ENCODE measurements at regions of chr22 and their contacts with region 1.

Region 1: DNA sequence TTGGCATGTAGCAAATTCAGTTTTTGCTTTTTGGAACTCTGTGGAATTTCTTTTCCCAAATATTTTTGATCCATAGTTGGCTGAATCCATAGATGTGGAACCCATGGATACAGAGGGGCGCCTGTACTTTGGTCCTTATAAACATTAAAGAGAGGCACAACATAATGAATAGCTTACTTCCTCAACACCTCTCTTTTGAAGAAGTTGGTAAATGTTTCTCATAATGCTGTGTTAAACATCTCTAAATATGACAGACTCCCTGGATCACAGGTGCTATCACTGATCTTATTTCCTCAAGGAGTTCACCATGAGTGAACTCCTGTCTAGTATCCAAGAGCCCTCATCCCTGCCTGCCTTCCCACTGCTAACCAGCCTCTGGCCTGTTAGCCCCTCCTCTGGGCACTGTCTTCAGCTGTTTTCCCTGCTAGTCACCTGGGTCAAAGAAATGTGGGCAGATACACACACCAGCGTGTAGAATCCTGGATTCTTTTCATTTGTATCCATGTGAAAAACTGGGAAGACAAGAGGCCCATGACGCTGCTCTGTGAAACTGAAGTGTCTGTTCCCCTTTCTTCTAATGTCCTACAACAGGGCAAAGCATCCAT is 63.7 kb downstream of the HIRA start:
- DNase-seq: no peak
- H3K4me3 ChIP-seq: no peak overlapping the region
- H3K27ac ChIP-seq: no peak overlapping the region
- H3K4me1 ChIP-seq: no peaks in the 10 kb centered on the region
- H3K27me3 ChIP-seq: no peaks in the 10 kb centered on the region
- CTCF ChIP-seq: no peak

Region 2: GRCh38 chr22:19341500-19341899 is 26.4 kb before region 1 on chr22:
- CTCF ChIA-PET with region 1: no interaction called
- POLR2A ChIA-PET with region 1: interaction called, 17 read pairs
- intact Hi-C with region 1: no loop called
- DNase-seq: no peak
- H3K4me3 ChIP-seq: no peak overlapping the region
- H3K27ac ChIP-seq: no peak overlapping the region
- H3K4me1 ChIP-seq: no peaks in the 10 kb centered on the region
- H3K27me3 ChIP-seq: no peaks in the 10 kb centered on the region
- CTCF ChIP-seq: no peak